ENCODE measurements at regions of chr11 and their contacts with region 1.

Region 1: DNA sequence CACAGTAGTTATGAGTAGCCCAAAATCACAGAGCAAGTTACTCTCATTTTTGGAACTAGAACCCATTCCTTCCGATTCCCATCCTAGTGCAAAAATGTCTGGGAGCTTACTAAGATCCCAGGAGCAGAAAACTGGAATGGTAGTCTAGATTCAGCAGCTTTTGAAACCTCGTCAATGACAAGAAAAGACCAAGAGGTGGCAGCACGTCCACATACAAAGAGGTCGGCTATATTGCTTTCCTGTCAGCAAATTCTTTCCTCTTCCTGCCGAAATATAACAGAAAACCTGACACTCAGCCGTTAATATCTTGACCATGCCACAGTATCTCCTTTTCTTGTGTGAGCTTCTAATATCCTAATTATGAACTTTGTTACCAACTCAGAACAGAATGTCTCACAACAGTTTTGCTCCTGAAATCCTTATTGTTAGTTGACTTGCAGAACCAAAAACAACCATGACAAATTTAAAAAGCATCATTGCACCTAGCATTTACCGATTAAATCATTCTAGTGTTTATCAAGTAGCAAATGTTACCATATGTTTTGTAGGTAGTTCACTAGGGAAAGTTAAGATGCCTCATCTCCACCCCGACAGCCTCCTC is 92.8 kb upstream of the OR9G4 start:
- DNase-seq: no peak
- H3K4me3 ChIP-seq: no peak overlapping the region
- H3K27ac ChIP-seq: no peak overlapping the region
- H3K4me1 ChIP-seq: no peaks in the 10 kb centered on the region
- H3K27me3 ChIP-seq: peaks cover 0 to 4% (median 0%) of the 10 kb centered on the region in 3 donors
- CTCF ChIP-seq: peak; percentile 40 to 67 (median 48)
- EP300 ChIP-seq: no peak
- POLR2A ChIP-seq: no peak

Region 2: DNA sequence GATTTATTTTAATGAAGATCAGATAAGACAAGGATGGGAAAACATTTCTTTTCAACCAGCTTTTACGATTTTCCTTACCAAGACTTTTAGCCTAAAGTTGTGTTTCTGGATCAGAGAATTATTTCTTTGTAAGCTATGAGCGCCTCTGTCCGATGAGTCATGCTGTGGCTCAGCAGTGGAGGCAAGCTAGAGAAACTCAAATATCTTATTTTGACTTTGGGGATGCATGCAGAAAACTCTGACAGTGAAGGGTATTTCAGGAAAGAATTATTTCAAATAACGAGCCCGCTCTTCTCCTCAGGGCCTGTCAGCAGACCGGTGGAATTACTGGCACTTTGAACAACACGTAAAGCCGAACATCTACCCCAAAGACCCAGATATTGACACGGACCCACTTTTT is 69.5 kb after region 1 on chr11:
- intact Hi-C with region 1: no loop called
- DNase-seq: no peak
- H3K4me3 ChIP-seq: no peak overlapping the region
- H3K27ac ChIP-seq: no peak overlapping the region
- H3K4me1 ChIP-seq: no peaks in the 10 kb centered on the region
- H3K27me3 ChIP-seq: no peaks in the 10 kb centered on the region
- CTCF ChIP-seq: no peak
- EP300 ChIP-seq: no peak
- POLR2A ChIP-seq: no peak

Region 3: GRCh38 chr11:57124917-57125316 is 283.6 kb after region 1 on chr11:
- intact Hi-C with region 1: loop called (anchors 10 kb)
- DNase-seq: no peak
- H3K4me3 ChIP-seq: no peak overlapping the region
- H3K27ac ChIP-seq: no peak overlapping the region
- H3K4me1 ChIP-seq: no peaks in the 10 kb centered on the region
- H3K27me3 ChIP-seq: no peaks in the 10 kb centered on the region
- CTCF ChIP-seq: no peak
- EP300 ChIP-seq: no peak
- POLR2A ChIP-seq: no peak

Region 4: DNA sequence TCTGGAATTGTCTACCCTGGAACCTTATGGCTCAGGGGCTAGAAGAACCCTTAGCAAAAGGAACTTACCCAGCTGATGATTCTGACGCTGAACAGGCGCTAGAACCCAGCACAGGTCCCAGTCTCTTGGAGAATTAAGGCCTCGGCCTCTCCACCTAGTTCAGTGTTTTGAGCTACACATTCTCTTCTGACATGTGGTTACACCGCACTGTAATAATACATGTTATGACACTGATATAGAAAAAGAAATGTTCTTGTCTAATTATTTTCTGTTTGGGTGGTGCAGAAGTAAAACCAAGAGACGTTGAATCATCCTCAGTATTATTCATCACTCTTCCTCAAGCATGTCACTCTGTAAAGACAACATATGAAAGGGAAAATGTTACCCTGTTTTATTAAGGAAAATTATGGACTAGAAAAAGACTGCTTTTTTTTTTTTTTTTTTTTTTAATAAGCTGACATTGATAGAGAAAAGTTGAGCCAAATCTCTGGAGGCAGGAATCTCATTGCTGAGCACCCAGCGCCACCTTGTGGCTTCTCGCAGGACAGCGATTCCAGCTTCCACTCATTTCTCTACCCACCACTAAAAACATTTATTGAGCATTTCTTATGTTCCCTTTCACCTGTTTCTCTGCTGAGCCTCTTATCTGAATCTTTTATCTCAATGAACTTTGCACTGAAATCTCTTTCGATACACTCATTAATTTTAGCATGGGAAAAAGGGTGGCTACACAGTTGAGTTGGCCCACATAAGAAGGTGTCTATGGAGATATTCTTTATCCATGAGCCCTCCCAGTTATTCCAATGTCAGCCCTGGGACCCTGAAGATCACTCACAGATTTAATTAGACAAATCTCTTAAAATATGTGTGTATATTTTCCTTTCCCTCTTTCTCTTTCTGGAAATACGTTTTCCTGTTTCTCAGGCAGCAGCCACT is 408.3 kb after region 1 on chr11:
- intact Hi-C with region 1: loop called (anchors 2 kb)
- DNase-seq: peak; percentile 72
- H3K4me3 ChIP-seq: no peak overlapping the region
- H3K27ac ChIP-seq: peak overlapping the region in 2 of 4 donors; percentile 12 to 35
- H3K4me1 ChIP-seq: peaks cover 0 to 8% (median 4%) of the 10 kb centered on the region in 4 donors
- H3K27me3 ChIP-seq: no peaks in the 10 kb centered on the region
- CTCF ChIP-seq: peak; percentile 47 to 79 (median 74)
- EP300 ChIP-seq: no peak
- POLR2A ChIP-seq: no peak

Region 5: GRCh38 chr11:57345555-57346211 is 504.4 kb after region 1 on chr11:
- intact Hi-C with region 1: loop called (anchors 10 kb)
- DNase-seq: peak; percentile 80
- H3K4me3 ChIP-seq: no peak overlapping the region
- H3K27ac ChIP-seq: no peak overlapping the region
- H3K4me1 ChIP-seq: peaks cover 0 to 7% (median 5%) of the 10 kb centered on the region in 4 donors
- H3K27me3 ChIP-seq: peaks cover 0 to 4% (median 0%) of the 10 kb centered on the region in 3 donors
- CTCF ChIP-seq: peak in 3 of 4 experiments; percentile 31 to 84 (median 46)
- EP300 ChIP-seq: no peak
- POLR2A ChIP-seq: no peak